ENCODE measurements at regions of chr1 and their contacts with region 1.

Region 1: GRCh38 chr1:12220890-12221289 is 8.9 kb upstream of the VPS13D start:
- DNase-seq: no peak
- ATAC-seq: no peak
- H3K4me3 ChIP-seq: no peak overlapping the region
- H3K27ac ChIP-seq: no peak overlapping the region
- H3K4me1 ChIP-seq: no peaks in the 10 kb centered on the region
- CTCF ChIP-seq: no peak
- EP300 ChIP-seq: no peak
- POLR2A ChIP-seq: no peak
- RAD21 ChIP-seq: no peak

Region 2: GRCh38 chr1:12208764-12209494 is 12.0 kb before region 1 on chr1:
- CTCF ChIA-PET with region 1: interaction called, 10 read pairs
- POLR2A ChIA-PET with region 1: no interaction called
- DNase-seq: peak; percentile 64 to 67
- ATAC-seq: peak; percentile 94 to 97
- H3K4me3 ChIP-seq: no peak overlapping the region
- H3K27ac ChIP-seq: no peak overlapping the region
- H3K4me1 ChIP-seq: no peaks in the 10 kb centered on the region
- CTCF ChIP-seq: peak; percentile 82
- EP300 ChIP-seq: no peak
- POLR2A ChIP-seq: no peak
- RAD21 ChIP-seq: peak; percentile 91 to 96